Naive thymus-derived CD8-positive, alpha-beta T cell (primary cell): ENCODE measurements at regions of chr2 and their contacts with region 1.

Region 1: DNA sequence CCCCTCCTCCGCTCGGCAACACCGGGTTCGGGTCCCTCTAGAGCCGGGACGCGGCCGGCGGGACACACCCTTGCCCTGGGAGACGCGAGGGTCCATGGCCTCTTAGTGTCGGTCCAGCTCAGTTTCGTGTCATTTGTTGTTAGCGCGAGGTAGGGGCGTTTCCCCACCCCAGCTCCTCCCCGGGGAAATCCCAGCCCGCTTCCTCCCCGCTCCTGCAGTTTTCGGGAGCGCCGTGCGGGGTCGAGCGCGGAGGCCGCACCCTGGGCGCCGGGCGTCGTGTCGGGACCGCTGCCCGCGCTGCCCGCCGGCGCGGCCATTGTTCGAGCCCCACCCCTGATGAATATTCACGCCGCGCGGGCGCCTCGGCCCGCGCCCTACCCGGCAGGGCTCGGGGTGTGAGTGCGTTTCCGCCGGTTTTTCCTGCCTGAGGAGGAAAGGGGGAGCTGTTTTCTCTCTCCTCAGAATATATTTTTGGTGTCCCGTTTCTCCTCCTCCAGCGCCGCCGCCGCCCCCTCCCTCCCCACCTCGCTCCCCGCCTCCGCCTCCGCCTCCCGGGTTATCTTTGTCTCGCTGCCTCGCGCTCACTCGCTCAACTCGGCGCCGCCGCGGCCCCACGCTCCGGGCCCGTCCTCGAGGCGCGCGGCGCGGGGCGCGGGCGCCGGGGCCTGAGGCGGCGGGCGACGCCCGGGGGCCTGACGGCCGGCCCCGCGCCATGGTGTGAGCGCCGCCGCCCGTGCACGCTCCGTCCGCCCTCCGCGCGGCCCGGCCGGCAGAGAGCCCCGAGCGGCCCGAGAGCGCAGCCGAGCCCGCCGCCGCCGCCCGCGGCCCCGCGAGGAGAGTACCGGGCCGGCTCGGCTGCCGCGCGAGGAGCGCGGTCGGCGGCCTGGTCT is at the start of gene MAP4K4:
- DNase-seq: peak; percentile 57 to 87 (median 66)
- ATAC-seq: peak; percentile 63
- H3K4me3 Mint-ChIP-seq: peak within 1 kb of the TSS in 9 of 10 donors; percentile 85 to 98 (median 95)
- H3K27ac Mint-ChIP-seq: peak within 1 kb of the TSS; percentile 93 to 97 (median 96)
- H3K4me1 Mint-ChIP-seq: peaks cover 19 to 42% (median 28%) of the 10 kb centered on the region in 4 donors
- H3K27me3 Mint-ChIP-seq: no peaks in the 10 kb centered on the region
- polyA plus RNA-seq, gene MAP4K4: 9.5 to 26.6 (median 13.0) TPM

Region 2: GRCh38 chr2:101710471-101711318 is 13.3 kb after region 1 on chr2:
- POLR2A ChIA-PET with region 1: interaction called, 67 read pairs
- DNase-seq: no peak
- ATAC-seq: peak; percentile 24 to 62
- H3K4me3 Mint-ChIP-seq: peak overlapping the region; percentile 10 to 67 (median 48)
- H3K27ac Mint-ChIP-seq: peak overlapping the region in 9 of 10 donors; percentile 31 to 90 (median 72)
- H3K4me1 Mint-ChIP-seq: peaks cover 32 to 75% (median 63%) of the 10 kb centered on the region in 4 donors
- H3K27me3 Mint-ChIP-seq: no peaks in the 10 kb centered on the region

Region 3: GRCh38 chr2:101827246-101827645 is 129.9 kb after region 1 on chr2:
- POLR2A ChIA-PET with region 1: interaction called, 20 read pairs
- DNase-seq: no peak
- ATAC-seq: no peak
- H3K4me3 Mint-ChIP-seq: peak overlapping the region in 8 of 10 donors; percentile 26 to 73 (median 54)
- H3K27ac Mint-ChIP-seq: peak overlapping the region in 6 of 10 donors; percentile 47 to 87 (median 60)
- H3K4me1 Mint-ChIP-seq: peaks cover 47 to 80% (median 79%) of the 10 kb centered on the region in 4 donors
- H3K27me3 Mint-ChIP-seq: no peaks in the 10 kb centered on the region